ENCODE measurements at regions of chr16 and their contacts with region 1.

Region 1: DNA sequence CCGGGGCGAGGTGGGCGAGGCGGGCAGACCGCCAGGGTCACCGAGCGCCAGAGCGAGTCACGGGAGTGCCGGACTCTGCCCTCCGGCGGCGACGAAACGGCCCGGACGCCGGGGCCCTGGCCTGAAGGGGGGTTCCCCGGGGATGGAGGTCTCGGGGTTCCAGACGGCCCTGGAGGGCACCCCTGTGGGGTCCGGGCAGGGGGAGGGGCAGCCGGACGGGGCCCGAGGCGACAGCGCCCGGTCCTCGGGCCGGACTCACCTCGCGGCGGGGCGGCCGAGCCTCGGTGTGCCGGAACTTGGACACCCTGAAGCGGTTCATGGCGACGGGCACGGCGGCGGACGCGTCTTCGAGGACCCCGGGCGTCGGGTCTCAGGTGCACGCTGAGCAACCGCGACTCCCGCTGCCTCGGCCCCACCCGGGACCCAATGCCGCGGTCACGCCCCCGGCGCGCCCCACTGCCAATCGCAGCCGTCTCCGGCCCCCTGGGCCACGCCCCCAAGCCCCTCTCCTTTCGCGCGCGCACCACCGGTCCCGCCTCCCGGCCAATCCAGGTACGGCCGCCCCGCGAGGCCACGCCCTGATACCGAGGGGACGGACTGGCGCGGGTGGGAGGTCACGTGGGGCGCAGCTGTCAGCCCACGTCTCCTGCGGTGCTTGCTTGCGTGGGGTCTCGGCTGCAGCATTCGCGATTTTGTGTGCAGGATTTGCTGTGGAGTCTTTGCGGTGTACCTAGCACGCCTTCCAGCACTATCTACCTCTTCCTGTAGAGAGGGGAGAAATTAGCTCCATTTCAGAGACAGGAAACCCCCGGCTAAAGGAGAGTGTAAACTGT is at the start of gene CORO7:
- H3K4me3 Mint-ChIP-seq: peak within 1 kb of the TSS; percentile 86
- H3K27ac Mint-ChIP-seq: peak within 1 kb of the TSS; percentile 97
- H3K4me1 Mint-ChIP-seq: peaks cover 73% of the 10 kb centered on the region
- H3K27me3 Mint-ChIP-seq: no peaks in the 10 kb centered on the region

Region 2: DNA sequence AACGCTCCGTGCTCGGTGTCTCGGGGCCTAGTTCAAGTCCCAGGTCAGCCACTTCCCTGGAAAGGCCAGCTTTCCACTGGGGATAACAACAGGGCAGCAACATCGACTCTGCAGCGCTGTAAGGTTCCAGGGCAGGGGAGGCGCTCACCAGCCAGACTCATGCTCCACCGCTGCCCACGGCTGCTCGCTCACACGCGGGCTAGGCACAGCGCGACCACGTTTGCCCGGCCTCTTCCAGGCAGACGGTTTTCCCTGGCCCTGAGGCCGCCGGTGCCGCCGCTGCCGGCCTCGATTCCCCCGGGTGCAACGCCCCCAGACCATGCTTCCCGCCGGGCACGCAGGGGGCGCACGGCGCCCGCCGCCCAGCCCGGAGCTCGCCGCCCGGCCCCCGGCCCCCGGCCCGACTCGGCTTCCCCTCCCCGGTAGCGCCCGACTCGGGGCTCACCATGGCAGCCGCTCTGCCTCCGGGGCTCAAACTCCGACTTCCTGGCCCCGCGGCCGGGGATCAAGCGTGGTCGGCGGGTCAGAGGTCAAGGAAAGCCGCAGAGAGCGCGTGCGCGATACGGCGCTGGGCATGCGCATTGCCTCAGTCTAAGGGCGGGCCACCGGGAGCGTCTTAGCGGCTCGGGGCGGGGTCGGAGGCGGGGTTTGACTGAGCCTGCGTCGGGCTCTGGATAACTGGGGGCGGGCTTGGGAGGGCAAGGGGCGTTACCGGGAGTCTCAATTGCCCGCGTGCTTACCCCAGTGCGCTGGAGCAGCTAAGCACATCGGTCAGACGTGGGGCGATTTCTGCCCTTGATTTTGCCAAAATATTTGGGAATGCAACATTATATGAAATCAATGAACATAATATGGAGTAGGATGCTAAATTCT is 65.4 kb before region 1 on chr16 and contains the start of gene PAM16:
- intact Hi-C with region 1: loop called (anchors 5 kb)
- H3K4me3 Mint-ChIP-seq: peak within 1 kb of the TSS; percentile 86
- H3K27ac Mint-ChIP-seq: peak within 1 kb of the TSS; percentile 87
- H3K4me1 Mint-ChIP-seq: peaks cover 37% of the 10 kb centered on the region
- H3K27me3 Mint-ChIP-seq: no peaks in the 10 kb centered on the region

Measured in dendritic cell treated with granulocyte-macrophage colony-stimulating factor and Interleukin-4, amounts not matched to agents 40 ng/mL and 50 ng/mL, for 4 days (primary cell).